ENCODE measurements at regions of chr1 and their contacts with region 1.

Region 1: GRCh38 chr1:30379684-30380624 is 343.4 kb downstream of the MATN1 start:
- DNase-seq: peak in 1 of 2 experiments; percentile 72
- H3K4me3 ChIP-seq: no peak overlapping the region
- H3K27ac ChIP-seq: no peak overlapping the region
- H3K4me1 ChIP-seq: peaks cover 0 to 2% (median under 1%) of the 10 kb centered on the region in 4 experiments; a peak in 2 of 7 replicates
- H3K27me3 ChIP-seq: no peaks in the 10 kb centered on the region
- CTCF ChIP-seq: peak; percentile 37 to 93 (median 72)
- EP300 ChIP-seq: no peak
- POLR2A ChIP-seq: no peak
- RAD21 ChIP-seq: peak; percentile 82 to 86

Region 2: GRCh38 chr1:30253807-30254440 is 126.0 kb before region 1 on chr1:
- CTCF ChIA-PET with region 1: interaction called, 10 read pairs
- POLR2A ChIA-PET with region 1: no interaction called
- DNase-seq: no peak
- H3K4me3 ChIP-seq: no peak overlapping the region
- H3K27ac ChIP-seq: no peak overlapping the region; the same call in 1 of the 2 replicates
- H3K4me1 ChIP-seq: peaks cover 0 to 8% (median 4%) of the 10 kb centered on the region in 4 experiments; a peak in 4 of 7 replicates
- H3K27me3 ChIP-seq: no peaks in the 10 kb centered on the region; a peak in 1 of 7 replicates
- CTCF ChIP-seq: no peak
- EP300 ChIP-seq: no peak
- POLR2A ChIP-seq: no peak
- RAD21 ChIP-seq: no peak

Region 3: GRCh38 chr1:30322859-30323257 is 57.1 kb before region 1 on chr1:
- CTCF ChIA-PET with region 1: interaction called, 12 read pairs
- POLR2A ChIA-PET with region 1: no interaction called
- DNase-seq: peak in 1 of 2 experiments; percentile 58
- H3K4me3 ChIP-seq: no peak overlapping the region
- H3K27ac ChIP-seq: no peak overlapping the region
- H3K4me1 ChIP-seq: no peaks in the 10 kb centered on the region; a peak in 1 of 7 replicates
- H3K27me3 ChIP-seq: no peaks in the 10 kb centered on the region
- CTCF ChIP-seq: peak; percentile 40 to 69 (median 64)
- EP300 ChIP-seq: no peak
- POLR2A ChIP-seq: no peak
- RAD21 ChIP-seq: peak; percentile 22 to 48; a peak in 3 of 4 replicates

Region 4: DNA sequence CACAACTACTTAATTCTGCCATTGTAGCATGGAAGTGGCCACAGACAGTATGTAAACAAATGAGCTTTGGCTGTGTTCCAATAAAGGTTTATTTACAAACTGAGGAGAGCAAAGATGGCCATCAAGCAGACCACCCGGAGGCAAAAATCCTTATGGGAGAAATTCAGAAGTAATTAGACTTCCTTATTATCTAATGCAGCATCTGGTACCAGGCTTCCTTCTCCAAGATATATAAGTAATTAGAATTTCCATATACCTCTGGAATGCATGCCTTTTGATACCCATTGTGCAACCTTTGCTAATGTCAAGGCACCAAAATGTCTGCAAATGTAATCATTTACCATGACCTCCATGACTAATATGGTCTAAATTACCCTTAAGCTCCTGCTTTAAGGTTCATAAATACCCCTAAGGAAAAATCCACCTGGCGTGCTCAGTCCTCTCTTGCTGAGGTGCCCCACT is 34.3 kb before region 1 on chr1:
- CTCF ChIA-PET with region 1: interaction called, 11 read pairs
- POLR2A ChIA-PET with region 1: no interaction called
- DNase-seq: no peak
- H3K4me3 ChIP-seq: no peak overlapping the region
- H3K27ac ChIP-seq: no peak overlapping the region
- H3K4me1 ChIP-seq: peaks cover 0 to 4% (median 0%) of the 10 kb centered on the region in 4 experiments; a peak in 3 of 7 replicates
- H3K27me3 ChIP-seq: no peaks in the 10 kb centered on the region
- CTCF ChIP-seq: no peak
- EP300 ChIP-seq: no peak
- POLR2A ChIP-seq: no peak
- RAD21 ChIP-seq: no peak

Region 5: GRCh38 chr1:30366911-30367310 is 13.0 kb before region 1 on chr1:
- CTCF ChIA-PET with region 1: interaction called, 139 read pairs
- POLR2A ChIA-PET with region 1: no interaction called
- DNase-seq: peak in 1 of 2 experiments; percentile 45
- H3K4me3 ChIP-seq: no peak overlapping the region
- H3K27ac ChIP-seq: no peak overlapping the region
- H3K4me1 ChIP-seq: peaks cover 0 to 3% (median 0%) of the 10 kb centered on the region in 4 experiments; a peak in 2 of 7 replicates
- H3K27me3 ChIP-seq: no peaks in the 10 kb centered on the region; a peak in 1 of 7 replicates
- CTCF ChIP-seq: no peak
- EP300 ChIP-seq: no peak
- POLR2A ChIP-seq: no peak
- RAD21 ChIP-seq: no peak

Region 6: DNA sequence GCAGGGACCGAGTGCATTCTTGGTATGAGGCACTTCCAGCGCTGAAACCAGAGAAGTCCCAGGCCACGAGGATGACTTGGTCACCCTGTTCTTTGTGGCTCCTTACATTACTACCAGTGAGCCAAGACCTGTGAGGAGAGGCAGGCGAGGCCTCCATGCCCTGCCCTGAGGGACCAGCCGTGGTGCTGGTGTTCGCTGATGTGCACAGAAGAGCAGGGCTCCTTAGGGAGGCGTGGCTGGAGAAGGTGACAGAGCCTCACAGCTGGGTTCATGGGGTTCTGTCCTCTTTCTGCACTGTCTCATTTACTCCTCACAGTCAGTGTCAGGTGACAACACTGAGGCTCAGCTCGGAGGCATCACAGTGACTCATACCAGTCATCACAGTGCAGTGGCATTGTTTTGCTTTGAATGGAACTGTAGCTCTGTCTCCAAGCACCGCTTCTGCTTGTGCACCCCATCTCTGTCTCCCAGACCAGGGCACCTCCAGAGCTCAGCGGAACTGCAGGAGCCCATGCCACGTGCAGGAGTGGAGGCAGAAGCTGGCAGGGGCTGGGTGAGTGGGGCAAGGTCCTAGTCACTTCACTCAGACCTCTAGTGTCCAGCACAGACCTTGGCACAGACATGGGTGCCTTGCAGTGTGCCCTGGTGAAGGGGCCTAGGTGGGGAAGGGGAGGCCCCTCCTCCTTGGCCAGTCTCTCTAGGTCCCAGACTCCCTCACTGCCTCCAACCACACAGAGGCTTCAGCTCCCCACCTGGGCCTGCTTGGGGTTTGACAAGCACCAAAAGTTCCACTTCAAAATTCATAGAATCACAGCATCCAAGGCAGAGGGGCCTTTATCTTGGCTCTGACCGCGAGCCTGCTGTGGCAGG is 32.5 kb after region 1 on chr1:
- CTCF ChIA-PET with region 1: interaction called, 11 read pairs
- POLR2A ChIA-PET with region 1: no interaction called
- DNase-seq: peak in 1 of 2 experiments; percentile 23
- H3K4me3 ChIP-seq: no peak overlapping the region
- H3K27ac ChIP-seq: no peak overlapping the region
- H3K4me1 ChIP-seq: no peaks in the 10 kb centered on the region
- H3K27me3 ChIP-seq: no peaks in the 10 kb centered on the region
- CTCF ChIP-seq: no peak
- EP300 ChIP-seq: no peak
- POLR2A ChIP-seq: no peak
- RAD21 ChIP-seq: no peak

Region 7: DNA sequence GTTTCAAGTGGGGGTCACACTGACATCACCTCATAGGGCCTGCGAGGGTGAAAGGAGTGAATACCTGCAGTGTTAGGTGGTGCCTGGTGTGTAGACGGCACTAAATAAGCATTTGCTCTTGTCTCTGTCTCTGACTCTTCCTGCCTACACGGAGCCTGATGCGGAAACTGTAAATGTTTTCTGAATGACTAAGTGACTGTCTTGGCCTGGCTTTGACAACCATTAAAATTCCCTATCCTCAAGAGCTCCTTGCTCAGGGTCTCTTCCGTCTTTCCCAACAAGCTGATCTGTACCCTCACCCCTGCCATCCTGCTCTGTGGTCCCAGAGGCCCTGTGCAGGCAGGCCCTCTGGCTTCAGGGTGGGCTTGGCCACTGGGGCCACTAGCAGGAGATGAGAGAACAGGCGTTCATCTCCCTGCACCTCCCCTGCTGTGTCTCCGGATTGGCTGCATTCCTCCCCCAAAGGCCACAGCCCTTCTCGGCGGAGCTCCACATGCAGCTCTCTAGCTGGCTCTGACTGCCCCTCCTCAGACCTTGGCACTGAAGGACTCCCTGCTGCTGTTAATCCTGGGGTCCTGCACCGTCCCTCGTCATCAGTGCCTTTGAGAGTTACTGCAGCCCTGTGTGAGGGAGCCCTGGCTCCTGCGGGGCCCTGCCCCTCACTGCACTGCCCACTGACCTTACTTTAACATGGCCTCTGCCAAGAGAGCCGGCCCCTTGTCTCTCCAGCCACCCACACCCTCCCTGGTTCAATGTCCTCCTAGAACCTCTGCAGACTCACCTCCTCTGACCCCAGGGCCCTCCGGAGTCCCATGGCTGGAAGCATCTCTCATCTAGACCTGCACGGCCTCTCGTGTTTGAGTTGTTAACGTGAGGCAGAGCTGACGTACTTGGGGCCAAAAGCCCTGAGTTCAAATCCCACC is 132.3 kb after region 1 on chr1:
- CTCF ChIA-PET with region 1: no interaction called
- POLR2A ChIA-PET with region 1: no interaction called
- DNase-seq: peak in 1 of 2 experiments; percentile 52
- H3K4me3 ChIP-seq: no peak overlapping the region
- H3K27ac ChIP-seq: no peak overlapping the region
- H3K4me1 ChIP-seq: peaks cover 3 to 13% (median 8%) of the 10 kb centered on the region in 4 experiments; a peak in 5 of 7 replicates
- H3K27me3 ChIP-seq: no peaks in the 10 kb centered on the region
- CTCF ChIP-seq: no peak
- EP300 ChIP-seq: no peak
- POLR2A ChIP-seq: no peak
- RAD21 ChIP-seq: 0 out of 4 replicates have a peak, but pooled peaks of 1 of the 2 experiments have one; percentile 4

Region 8: DNA sequence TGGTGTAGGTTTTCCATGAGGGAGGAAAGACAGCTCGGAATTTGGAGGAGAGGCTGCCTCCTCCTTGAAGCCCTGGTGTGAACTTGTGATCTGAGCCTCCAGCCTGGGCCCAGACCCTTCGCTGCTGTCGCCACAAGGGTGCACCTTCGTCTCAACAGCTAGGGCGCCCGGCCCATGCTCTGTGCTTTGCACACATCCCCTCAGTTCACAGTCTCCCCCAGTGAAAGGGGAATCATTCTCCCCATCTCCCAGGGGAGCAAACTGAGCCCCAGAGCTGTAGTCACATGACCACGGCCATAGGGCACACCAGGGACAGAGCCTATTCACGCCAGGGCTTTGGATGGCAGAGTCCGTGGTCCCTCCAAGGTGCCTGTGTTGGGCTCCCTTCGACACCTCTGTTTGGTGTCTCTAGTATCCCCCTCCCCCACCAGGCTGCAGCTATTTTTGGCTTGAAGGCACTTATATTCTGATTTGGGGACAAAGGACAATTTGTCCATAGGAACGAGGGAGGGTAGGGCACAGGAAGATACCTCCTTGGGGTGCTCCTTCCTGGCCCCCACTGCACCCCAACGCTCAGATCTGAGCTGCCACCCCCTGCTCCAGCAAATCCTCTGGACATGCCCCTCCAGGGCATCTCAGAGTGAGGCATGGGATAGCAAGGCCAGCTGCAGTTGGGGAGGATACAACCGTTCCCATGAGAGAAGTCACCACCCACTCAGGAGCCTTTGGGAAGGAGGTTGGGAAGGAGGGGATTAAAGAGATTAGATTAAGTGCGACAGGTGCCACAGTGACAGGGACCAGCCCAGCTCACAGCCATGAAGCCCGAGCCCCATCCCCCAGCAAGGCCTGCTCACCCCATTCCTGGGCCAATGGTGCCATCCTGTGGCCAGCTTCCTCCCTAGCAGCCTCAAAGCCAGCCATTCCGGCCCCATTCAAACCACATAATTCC is 327.7 kb after region 1 on chr1:
- CTCF ChIA-PET with region 1: interaction called, 24 read pairs
- POLR2A ChIA-PET with region 1: no interaction called
- DNase-seq: peak in 1 of 2 experiments; percentile 94
- H3K4me3 ChIP-seq: no peak overlapping the region
- H3K27ac ChIP-seq: no peak overlapping the region
- H3K4me1 ChIP-seq: peaks cover 0 to 3% (median under 1%) of the 10 kb centered on the region in 4 experiments; a peak in 4 of 7 replicates
- H3K27me3 ChIP-seq: no peaks in the 10 kb centered on the region
- CTCF ChIP-seq: peak; percentile 90 to 95 (median 92)
- EP300 ChIP-seq: no peak
- POLR2A ChIP-seq: no peak
- RAD21 ChIP-seq: peak; percentile 99 to 100

Measured in H1 (cell line).